B cell (primary cell): ENCODE measurements at regions of chr5 and their contacts with region 1.

Region 1: DNA sequence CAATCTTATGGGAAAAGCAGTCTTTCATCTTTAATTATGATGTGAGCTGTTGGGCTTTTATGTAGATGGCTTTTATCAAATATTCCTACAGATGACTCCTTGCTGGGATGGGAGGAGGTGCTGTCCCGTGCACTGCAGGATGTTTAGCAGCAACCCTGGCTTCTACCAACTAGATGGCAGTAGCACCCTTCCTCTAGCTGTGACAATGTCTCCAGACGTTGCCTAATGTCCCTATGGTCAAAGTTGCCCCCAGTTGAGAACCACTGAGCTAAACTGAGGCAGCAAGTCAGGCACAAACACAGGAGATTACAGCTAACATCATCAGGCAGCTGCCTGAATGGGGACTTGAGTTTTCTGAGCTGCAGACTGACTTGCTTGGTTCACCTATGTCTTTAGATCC is 401.9 kb upstream of the PDE4D start:
- DNase-seq: peak; percentile 51
- ATAC-seq: no peak
- H3K4me3 ChIP-seq: no peak overlapping the region
- H3K4me3 Mint-ChIP-seq: no peak overlapping the region
- H3K27ac ChIP-seq: no peak overlapping the region
- H3K27ac Mint-ChIP-seq: no peak overlapping the region
- H3K4me1 ChIP-seq: no peaks in the 10 kb centered on the region
- H3K4me1 Mint-ChIP-seq: no peaks in the 10 kb centered on the region
- H3K27me3 ChIP-seq: no peaks in the 10 kb centered on the region
- H3K27me3 Mint-ChIP-seq: no peaks in the 10 kb centered on the region
- CTCF ChIP-seq: peak; percentile 41

Region 2: GRCh38 chr5:60223342-60223741 is 72.1 kb before region 1 on chr5:
- CTCF ChIA-PET with region 1: no interaction called
- POLR2A ChIA-PET with region 1: no interaction called
- intact Hi-C with region 1: no loop called
- DNase-seq: no peak
- ATAC-seq: no peak
- H3K4me3 ChIP-seq: no peak overlapping the region
- H3K4me3 Mint-ChIP-seq: no peak overlapping the region
- H3K27ac ChIP-seq: no peak overlapping the region
- H3K27ac Mint-ChIP-seq: no peak overlapping the region
- H3K4me1 ChIP-seq: no peaks in the 10 kb centered on the region
- H3K4me1 Mint-ChIP-seq: no peaks in the 10 kb centered on the region
- H3K27me3 ChIP-seq: no peaks in the 10 kb centered on the region
- H3K27me3 Mint-ChIP-seq: no peaks in the 10 kb centered on the region
- CTCF ChIP-seq: no peak

Region 3: DNA sequence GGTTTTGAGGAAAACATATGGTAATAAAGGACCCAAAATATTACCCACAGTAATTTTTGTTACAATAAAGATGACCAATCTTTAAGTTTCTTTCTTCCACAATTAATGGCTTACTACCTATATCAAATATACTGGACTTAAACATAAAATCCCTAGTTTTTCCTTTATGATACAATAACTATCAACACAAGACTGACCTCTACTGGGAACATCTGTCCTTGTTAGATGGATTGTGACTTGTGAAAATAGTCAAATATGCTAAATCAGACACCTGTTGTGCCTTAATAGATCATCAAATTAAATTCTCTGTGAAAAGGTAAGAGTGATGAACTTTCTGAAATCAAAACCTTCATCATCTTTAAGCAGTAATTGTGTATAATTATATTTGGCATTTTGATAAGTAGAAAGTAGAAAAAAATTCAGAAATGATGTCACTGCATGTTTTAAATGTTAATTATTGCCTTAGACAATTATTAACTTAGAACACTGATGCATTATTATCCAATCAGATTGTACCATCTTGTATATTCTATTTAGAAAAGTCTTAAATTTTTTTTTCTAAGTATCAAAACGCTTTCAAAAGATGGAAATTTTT is 291.0 kb after region 1 on chr5:
- CTCF ChIA-PET with region 1: interaction called, 12 read pairs
- POLR2A ChIA-PET with region 1: no interaction called
- intact Hi-C with region 1: loop called (anchors 1 kb)
- DNase-seq: peak; percentile 54
- ATAC-seq: no peak
- H3K4me3 ChIP-seq: no peak overlapping the region
- H3K4me3 Mint-ChIP-seq: no peak overlapping the region
- H3K27ac ChIP-seq: no peak overlapping the region
- H3K27ac Mint-ChIP-seq: no peak overlapping the region
- H3K4me1 ChIP-seq: peaks cover 9 to 10% of the 10 kb centered on the region in 2 donors
- H3K4me1 Mint-ChIP-seq: peaks cover 15% of the 10 kb centered on the region
- H3K27me3 ChIP-seq: no peaks in the 10 kb centered on the region
- H3K27me3 Mint-ChIP-seq: no peaks in the 10 kb centered on the region
- CTCF ChIP-seq: peak; percentile 75